AG04450 (cell line): ENCODE measurements at regions of chr12 and their contacts with region 1.

Region 1: DNA sequence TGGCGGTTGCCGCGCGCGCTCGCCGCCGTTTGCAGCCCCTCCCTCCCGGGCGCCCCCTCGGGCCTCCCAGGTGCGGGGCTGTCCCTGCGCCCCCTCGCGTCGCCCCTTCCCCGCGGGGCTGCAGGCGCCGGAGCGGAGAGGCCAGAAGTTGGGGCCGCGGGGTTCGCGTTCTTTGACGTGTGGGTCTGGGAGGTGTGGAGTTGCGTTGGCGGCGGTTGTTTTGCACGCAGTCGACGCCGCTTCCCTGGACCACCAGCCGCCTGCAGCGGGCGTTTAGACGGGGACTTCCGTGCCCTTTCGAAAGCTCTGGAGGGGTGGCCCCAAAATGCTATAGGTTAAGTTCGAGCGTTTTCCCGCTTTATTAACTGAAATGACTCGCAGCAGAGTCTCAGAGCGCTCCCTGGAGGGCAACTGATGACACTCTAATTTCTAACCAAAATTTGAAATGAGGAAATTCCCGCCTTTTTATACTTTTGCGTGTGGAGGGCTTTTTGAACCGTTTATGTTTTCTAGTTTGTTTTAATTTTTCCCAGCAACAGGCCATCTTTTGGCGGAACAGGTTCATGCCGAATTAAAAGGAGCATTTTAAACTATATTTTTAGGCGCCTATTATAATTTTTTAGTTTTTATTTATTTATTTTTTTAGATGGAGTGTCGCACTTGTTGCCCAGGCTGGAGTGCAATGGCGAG is 939 bp downstream of the TMPO start:
- DNase-seq: peak; percentile 59
- H3K4me3 ChIP-seq: peak overlapping the region; percentile 90
- H3K27ac ChIP-seq: peak overlapping the region; percentile 31
- H3K27me3 ChIP-seq: no peaks in the 10 kb centered on the region
- CTCF ChIP-seq: peak; percentile 75

Region 2: GRCh38 chr12:98424726-98425401 is 91.5 kb before region 1 on chr12:
- CTCF ChIA-PET with region 1: interaction called, 15 read pairs
- POLR2A ChIA-PET with region 1: no interaction called
- DNase-seq: peak; percentile 43
- H3K4me3 ChIP-seq: no peak overlapping the region
- H3K27ac ChIP-seq: no peak overlapping the region
- H3K27me3 ChIP-seq: no peaks in the 10 kb centered on the region
- CTCF ChIP-seq: peak; percentile 73

Region 3: DNA sequence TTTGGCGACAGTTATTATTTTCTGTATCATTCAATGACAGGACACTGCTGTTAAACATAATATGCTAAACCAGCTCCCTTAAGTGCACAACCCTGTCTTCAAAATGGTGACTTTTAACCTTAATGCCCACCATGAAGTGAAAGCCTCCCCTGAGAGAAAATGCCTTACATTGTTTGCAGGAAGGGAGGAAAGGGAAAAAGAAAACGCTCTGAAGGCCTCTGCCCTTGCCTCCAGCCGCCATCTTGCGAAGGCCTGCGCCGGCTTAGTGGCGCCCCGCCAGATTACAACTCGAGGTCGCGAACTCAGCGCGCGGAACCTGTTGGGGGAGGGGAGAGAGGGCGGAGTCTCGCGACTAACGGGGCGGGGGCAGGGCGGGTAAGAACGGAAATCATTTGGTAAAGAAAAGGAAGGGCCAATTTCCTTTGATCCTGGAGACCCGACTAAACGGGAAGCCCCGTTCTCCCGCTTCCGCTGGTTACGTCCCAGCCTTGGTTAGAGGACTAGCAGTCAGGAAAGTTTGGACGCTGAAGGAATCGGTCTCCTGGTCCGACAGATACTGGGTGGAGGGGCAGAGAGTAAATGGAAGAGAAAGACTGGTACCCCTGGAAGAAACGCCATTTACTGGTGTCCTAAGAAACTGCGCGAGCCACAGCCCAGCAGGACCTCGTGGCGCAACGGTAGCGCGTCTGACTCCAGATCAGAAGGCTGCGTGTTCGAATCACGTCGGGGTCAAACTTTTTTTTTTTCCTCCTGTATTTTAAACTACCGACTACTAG is 12.5 kb before region 1 on chr12:
- CTCF ChIA-PET with region 1: interaction called, 3 read pairs
- POLR2A ChIA-PET with region 1: interaction called, 12 read pairs
- DNase-seq: peak; percentile 83
- H3K4me3 ChIP-seq: peak overlapping the region; percentile 74
- H3K27ac ChIP-seq: peak overlapping the region; percentile 98
- H3K27me3 ChIP-seq: no peaks in the 10 kb centered on the region
- CTCF ChIP-seq: no peak